Activated CD8-positive, alpha-beta T cell treated with anti-CD3 and anti-CD28 coated beads, Interleukin-2, amount 10 ng/mL, durations not matched to agents 7 days and 5 days (primary cell): ENCODE measurements at regions of chr10 and their contacts with region 1.

Region 1: GRCh38 chr10:102904346-102904745 is 13.7 kb upstream of the CNNM2 start:
- DNase-seq: no peak
- ATAC-seq: no peak
- H3K4me3 Mint-ChIP-seq: no peak overlapping the region
- H3K27ac Mint-ChIP-seq: no peak overlapping the region
- H3K4me1 Mint-ChIP-seq: no peaks in the 10 kb centered on the region
- H3K27me3 Mint-ChIP-seq: no peaks in the 10 kb centered on the region

Region 2: DNA sequence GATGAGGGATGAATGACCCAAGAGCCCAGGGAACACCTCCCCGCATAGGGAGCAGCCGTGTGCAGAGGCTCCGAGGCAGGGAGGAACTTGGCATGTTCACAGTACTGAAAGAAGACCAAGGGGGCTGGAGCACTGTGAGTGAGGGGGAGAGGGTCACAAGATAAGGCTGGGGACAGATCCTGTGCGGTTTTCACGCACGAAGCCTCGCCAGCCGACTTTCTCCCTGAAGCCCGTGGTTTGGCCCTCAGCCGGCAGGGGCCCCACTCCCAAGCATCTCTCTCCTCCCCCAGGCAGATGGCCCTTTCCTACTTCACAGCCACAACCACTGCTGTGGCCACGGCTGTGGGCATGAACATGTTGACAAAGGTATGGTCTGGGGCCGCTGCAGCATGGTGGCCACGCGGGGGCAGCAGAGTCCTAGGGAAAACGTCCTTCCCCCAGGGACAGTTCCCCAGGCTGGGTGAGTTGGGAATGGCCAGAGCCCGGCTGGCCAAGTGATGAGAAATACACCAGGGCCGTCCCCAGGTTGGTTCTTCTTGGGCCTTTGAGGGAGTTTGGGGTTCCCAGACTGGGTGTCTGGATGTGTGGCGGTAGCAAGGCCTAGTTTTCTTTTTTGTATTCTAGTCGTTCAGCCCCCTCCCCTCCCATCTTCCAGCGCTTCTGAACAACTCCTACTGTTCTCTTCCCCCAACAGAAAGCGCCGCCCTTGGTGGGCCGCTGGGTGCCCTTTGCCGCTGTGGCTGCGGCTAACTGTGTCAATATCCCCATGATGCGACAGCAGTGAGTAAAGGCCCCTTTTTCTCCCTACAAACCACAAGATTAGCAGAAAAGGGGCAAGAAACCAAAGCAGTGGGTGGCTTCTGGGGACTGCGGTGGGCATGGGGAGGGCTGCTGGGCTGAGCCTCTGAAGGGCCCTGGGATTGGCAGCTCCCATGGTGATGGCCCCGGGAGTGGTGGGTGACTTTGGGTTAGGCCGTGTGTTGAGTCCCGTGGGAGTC is 175.0 kb before region 1 on chr10:
- CTCF ChIA-PET with region 1: interaction called, 25 read pairs
- POLR2A ChIA-PET with region 1: no interaction called
- DNase-seq: peak; percentile 73
- ATAC-seq: peak; percentile 88
- H3K4me3 Mint-ChIP-seq: no peak overlapping the region
- H3K27ac Mint-ChIP-seq: peak overlapping the region; percentile 66
- H3K4me1 Mint-ChIP-seq: peaks cover 14% of the 10 kb centered on the region
- H3K27me3 Mint-ChIP-seq: no peaks in the 10 kb centered on the region

Region 3: GRCh38 chr10:102835007-102835482 is 69.3 kb before region 1 on chr10:
- CTCF ChIA-PET with region 1: interaction called, 41 read pairs
- POLR2A ChIA-PET with region 1: no interaction called
- DNase-seq: peak; percentile 84
- ATAC-seq: peak; percentile 99
- H3K4me3 Mint-ChIP-seq: no peak overlapping the region
- H3K27ac Mint-ChIP-seq: no peak overlapping the region
- H3K4me1 Mint-ChIP-seq: no peaks in the 10 kb centered on the region
- H3K27me3 Mint-ChIP-seq: peaks cover 9% of the 10 kb centered on the region

Region 4: GRCh38 chr10:102853944-102854694 is 50.2 kb before region 1 on chr10 and contains the start of gene BORCS7:
- CTCF ChIA-PET with region 1: interaction called, 12 read pairs
- POLR2A ChIA-PET with region 1: no interaction called
- DNase-seq: peak; percentile 95
- ATAC-seq: peak; percentile 100
- H3K4me3 Mint-ChIP-seq: peak within 1 kb of the TSS; percentile 97
- H3K27ac Mint-ChIP-seq: peak within 1 kb of the TSS; percentile 98
- H3K4me1 Mint-ChIP-seq: peaks cover 12% of the 10 kb centered on the region
- H3K27me3 Mint-ChIP-seq: no peaks in the 10 kb centered on the region
- total RNA-seq, gene BORCS7: 10.4 to 11.2 TPM

Region 5: GRCh38 chr10:103069453-103070331 is 165.3 kb after region 1 on chr10:
- CTCF ChIA-PET with region 1: interaction called, 13 read pairs
- POLR2A ChIA-PET with region 1: no interaction called
- DNase-seq: peak; percentile 82
- ATAC-seq: peak; percentile 85
- H3K4me3 Mint-ChIP-seq: peak overlapping the region; percentile 49
- H3K27ac Mint-ChIP-seq: peak overlapping the region; percentile 89
- H3K4me1 Mint-ChIP-seq: peaks cover 39% of the 10 kb centered on the region
- H3K27me3 Mint-ChIP-seq: no peaks in the 10 kb centered on the region

Region 6: DNA sequence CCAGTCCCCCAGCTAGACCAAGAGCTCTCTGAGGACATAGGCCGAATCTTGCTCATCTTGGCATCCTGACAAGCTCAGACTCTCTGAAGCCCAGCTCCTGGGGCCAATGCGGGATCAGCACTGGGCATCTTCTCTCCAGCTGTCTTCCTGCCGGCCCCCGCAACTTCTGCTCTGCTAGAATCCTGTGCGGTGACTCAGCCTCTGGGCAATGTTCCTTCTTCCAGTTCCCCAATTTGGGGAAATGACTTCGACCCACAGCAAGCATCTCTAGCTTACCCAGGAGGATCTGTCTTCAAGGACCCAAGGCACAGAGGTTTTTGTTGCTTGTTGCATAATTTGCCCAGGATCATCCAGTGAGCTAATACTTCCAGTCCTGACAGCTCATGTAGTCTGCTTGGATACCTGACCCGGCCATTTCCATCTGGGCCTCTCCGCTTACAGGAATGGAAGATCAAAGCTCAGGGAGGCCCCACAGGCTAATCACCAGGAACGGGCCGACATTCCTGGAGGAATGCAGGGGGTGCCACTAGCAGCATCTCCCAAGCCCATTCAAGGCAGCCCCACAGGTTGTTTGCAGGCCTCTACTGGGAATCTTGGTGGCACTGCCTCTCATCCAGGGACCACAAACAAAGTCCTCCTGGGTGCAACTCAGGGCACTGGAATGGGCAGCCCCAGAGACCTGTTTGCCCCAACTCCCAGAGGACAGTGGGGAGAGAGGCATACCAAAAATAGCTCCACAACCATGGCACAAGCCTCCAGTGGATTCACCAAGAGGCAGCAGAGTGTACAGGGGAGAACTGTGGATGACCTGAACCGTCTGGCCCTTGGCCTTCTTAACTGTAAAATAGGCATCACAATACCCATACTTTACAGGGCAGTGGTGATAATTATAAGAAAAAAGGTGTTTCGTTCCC is 741.1 kb after region 1 on chr10:
- CTCF ChIA-PET with region 1: no interaction called
- POLR2A ChIA-PET with region 1: no interaction called
- DNase-seq: no peak
- ATAC-seq: no peak
- H3K4me3 Mint-ChIP-seq: no peak overlapping the region
- H3K27ac Mint-ChIP-seq: no peak overlapping the region
- H3K4me1 Mint-ChIP-seq: no peaks in the 10 kb centered on the region
- H3K27me3 Mint-ChIP-seq: no peaks in the 10 kb centered on the region